HEK293T (cell line): ENCODE measurements at regions of chr3 and their contacts with region 1.

Region 1: DNA sequence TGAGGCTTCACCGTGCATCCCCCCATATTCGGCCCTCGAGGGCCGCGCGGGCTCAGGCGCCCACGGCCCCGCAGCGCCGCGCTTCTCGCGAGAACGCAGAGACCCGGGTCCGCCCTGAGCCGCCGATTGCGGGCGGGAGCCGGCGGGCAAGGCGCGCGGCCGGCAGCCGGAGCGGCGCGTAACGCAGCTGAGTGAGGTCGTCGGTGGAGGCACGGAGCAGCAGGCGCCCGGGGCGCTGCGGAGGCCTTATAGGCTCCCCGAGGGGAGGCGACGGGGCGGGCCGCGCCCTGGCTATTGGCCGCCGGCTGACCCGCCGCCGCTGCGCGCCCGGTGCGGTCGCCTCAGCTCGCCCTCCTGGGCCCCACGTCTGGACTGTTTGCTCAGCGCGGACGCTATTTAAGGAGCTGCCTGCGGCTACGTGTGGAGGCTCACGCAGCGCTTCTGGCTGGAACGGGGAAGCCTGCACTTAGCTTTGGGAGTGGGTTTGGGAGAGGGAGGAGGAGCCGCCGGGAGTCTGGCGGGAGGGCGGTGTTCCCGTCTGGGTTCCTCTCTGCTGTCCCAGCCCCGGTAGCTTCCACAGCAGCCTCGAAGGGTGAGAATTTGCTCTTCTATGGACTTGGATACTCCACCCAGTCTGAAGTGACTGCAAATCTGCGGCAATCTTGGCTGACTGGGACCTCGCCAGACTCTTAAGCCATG is at the start of gene PLOD2:
- DNase-seq: peak; percentile 74

Region 2: GRCh38 chr3:146052791-146053310 is 108.3 kb before region 1 on chr3:
- CTCF ChIA-PET with region 1: no interaction called
- POLR2A ChIA-PET with region 1: no interaction called
- DNase-seq: no peak

Region 3: GRCh38 chr3:146110161-146110560 is 51.0 kb before region 1 on chr3:
- CTCF ChIA-PET with region 1: no interaction called
- POLR2A ChIA-PET with region 1: no interaction called
- DNase-seq: no peak

Region 4: GRCh38 chr3:146125951-146126350 is 35.2 kb before region 1 on chr3:
- CTCF ChIA-PET with region 1: no interaction called
- POLR2A ChIA-PET with region 1: no interaction called
- DNase-seq: no peak

Region 5: DNA sequence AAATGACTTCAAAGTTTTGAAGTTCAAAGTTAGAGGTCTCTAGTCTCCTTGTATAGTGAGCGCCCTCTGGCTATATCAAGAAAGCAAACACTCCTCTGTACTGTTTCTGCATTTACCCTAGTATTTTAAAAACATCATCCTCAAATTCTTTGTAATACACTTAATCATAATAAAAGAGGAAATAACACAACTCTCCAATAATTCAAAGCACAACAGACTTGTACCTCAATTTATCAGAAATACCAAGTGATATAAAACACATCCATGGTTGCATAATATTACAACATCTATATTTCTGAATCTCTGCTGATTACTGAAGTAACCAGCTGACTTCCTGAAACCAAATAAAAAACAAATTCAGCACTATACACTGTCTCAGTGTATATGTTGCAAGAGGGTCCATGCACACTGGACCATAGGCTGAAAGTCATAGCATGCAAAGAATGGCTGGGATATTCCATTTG is 12.6 kb before region 1 on chr3:
- CTCF ChIA-PET with region 1: interaction called, 4 read pairs
- POLR2A ChIA-PET with region 1: interaction called, 11 read pairs
- DNase-seq: no peak